Heart right ventricle (tissue), 16 donors: ENCODE measurements at regions of chr6 and their contacts with region 1.

Region 1: GRCh38 chr6:93799226-93799625 is 379.9 kb upstream of the EPHA7 start:
- DNase-seq: no peak
- ATAC-seq: no peak
- H3K4me3 ChIP-seq: no peak overlapping the region
- H3K27ac ChIP-seq: no peak overlapping the region
- H3K4me1 ChIP-seq: no peaks in the 10 kb centered on the region
- H3K27me3 ChIP-seq: no peaks in the 10 kb centered on the region
- CTCF ChIP-seq: no peak

Region 2: DNA sequence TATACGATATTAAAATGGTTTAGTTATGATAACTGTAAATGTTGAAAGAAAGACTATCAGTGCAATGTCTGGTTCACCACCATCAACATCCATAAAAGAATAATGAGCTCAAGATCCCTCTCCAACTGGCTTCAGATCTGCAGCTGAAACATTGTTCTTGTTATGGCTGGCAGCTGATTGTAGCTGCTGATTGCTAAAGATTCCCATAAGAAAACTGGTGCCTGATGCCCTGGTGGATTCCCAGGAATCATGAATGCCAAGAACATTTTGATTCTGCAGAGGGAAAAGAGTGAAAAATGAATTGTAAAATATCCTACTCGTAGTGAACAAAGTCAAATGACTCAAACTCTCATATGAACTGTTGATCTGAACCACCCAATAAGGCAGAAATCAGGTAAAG is 1540.1 kb before region 1 on chr6:
- intact Hi-C with region 1: loop called in 1 of 10 experiments (anchors 5 kb)
- DNase-seq: no peak
- ATAC-seq: no peak
- H3K4me3 ChIP-seq: no peak overlapping the region
- H3K27ac ChIP-seq: no peak overlapping the region
- H3K4me1 ChIP-seq: no peaks in the 10 kb centered on the region
- H3K27me3 ChIP-seq: no peaks in the 10 kb centered on the region
- CTCF ChIP-seq: no peak